A549 (cell line): ENCODE measurements at regions of chr15 and their contacts with region 1.

Region 1: GRCh38 chr15:75809986-75810750 is 33.1 kb upstream of the UBE2Q2 start:
- DNase-seq: peak; percentile 55 to 65
- ATAC-seq: peak; percentile 79 to 92
- H3K4me3 ChIP-seq: no peak overlapping the region
- H3K27ac ChIP-seq: no peak overlapping the region
- H3K4me1 ChIP-seq: no peaks in the 10 kb centered on the region
- CTCF ChIP-seq: peak; percentile 65
- EP300 ChIP-seq: no peak
- POLR2A ChIP-seq: no peak
- RAD21 ChIP-seq: peak; percentile 79 to 85

Region 2: DNA sequence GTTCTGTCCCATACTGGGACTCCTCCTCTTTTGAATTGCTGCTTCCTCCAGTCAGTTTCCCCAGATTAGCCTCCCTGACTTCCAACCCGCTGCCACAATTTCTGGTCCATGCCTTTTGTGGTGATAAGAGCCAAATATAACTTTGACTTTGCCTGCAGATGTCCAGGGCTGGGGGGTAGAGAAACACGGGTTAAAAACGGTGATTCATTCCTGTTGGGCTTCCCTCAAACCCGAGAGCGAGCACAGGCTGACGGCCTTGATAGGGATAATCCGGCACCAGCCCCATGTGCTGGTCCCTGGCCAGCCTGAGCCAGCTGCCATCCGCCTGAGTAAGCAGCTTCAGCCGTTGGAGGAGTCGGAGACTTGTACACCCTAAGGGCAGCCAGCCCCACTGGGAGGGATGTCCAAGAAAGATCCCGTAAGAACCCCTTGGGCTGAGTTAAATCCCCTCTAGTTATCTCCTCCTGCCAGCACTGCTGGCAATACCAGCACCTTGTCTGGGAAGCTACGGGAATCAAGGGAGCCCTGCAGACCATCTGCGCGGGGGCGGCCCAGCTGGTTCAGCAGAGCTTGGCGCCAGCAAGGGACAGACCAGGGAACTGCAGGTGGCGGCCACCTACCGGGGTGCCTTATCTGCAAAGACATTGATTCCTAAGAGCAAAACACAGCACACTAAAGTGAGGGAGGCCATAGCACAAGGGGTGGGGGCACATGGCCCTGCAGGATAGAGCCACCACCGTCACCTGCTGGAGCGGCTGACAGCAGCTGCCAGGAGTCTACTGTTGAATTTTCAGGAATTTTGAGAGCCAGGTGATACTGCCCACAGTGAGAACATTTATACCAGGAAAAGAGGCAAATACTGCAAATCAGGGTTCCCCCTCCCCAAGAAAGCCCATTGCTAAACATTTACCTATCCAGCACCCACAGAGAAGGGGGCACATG is 115.7 kb before region 1 on chr15:
- CTCF ChIA-PET with region 1: interaction called, 11 read pairs
- POLR2A ChIA-PET with region 1: no interaction called
- DNase-seq: peak; percentile 60 to 71
- ATAC-seq: peak; percentile 71 to 86
- H3K4me3 ChIP-seq: no peak overlapping the region
- H3K27ac ChIP-seq: peak overlapping the region; percentile 39 to 81; a peak in 4 of 6 replicates
- H3K4me1 ChIP-seq: peaks cover 19% of the 10 kb centered on the region
- CTCF ChIP-seq: 0 out of 3 replicates have a peak, but pooled peaks have one; percentile 20
- EP300 ChIP-seq: no peak
- POLR2A ChIP-seq: no peak
- RAD21 ChIP-seq: peak in 1 of 2 experiments; percentile 26; a peak in 1 of 5 replicates

Region 3: DNA sequence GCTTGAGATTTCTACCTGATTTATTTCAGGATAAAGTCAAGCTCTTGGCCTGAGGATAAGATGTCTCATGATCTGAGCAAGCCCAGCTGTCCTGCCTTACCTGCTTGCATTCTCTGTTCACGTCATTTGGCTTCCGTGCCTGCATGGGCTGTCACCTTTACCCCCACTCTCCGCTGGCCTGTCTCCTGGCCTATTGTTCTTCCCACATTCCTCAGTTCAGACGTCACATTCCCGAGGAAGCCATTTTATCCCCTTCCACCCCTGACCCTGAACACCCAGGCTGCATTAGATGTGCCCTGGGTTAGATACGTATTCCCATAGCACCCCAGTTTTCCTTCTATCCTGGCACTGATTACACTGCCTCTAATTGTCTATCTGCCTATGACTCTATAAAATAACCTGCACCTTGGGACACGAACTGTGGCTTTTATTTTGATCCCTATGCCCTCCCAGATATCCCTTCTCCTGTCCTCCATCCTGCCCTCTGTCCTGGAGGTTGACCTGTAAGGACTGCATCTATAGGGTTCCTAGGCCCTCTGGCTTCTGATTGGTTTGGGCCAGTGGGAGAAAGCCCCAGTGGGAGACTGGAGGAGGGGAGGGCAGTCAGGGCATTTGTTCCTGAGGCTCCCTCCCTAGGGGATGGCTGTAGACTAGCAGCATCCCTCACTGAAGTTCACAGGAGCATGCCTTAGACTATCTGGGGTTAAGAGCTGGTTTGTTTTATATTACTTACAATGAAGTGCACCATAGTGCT is 13.9 kb after region 1 on chr15:
- CTCF ChIA-PET with region 1: interaction called, 47 read pairs
- POLR2A ChIA-PET with region 1: no interaction called
- DNase-seq: peak in 1 of 2 experiments; percentile 25
- ATAC-seq: peak; percentile 22 to 69; a peak in 3 of 6 replicates
- H3K4me3 ChIP-seq: no peak overlapping the region
- H3K27ac ChIP-seq: no peak overlapping the region
- H3K4me1 ChIP-seq: no peaks in the 10 kb centered on the region
- CTCF ChIP-seq: no peak
- EP300 ChIP-seq: no peak
- POLR2A ChIP-seq: no peak
- RAD21 ChIP-seq: no peak

Region 4: GRCh38 chr15:75842722-75843551 is 32.8 kb after region 1 on chr15 and contains the start of gene UBE2Q2:
- CTCF ChIA-PET with region 1: interaction called, 17 read pairs
- POLR2A ChIA-PET with region 1: interaction called, 9 read pairs
- DNase-seq: peak; percentile 88 to 93
- ATAC-seq: peak; percentile 77 to 80
- H3K4me3 ChIP-seq: peak within 1 kb of the TSS; percentile 66
- H3K27ac ChIP-seq: peak within 1 kb of the TSS; percentile 88 to 92
- H3K4me1 ChIP-seq: peaks cover 21% of the 10 kb centered on the region
- CTCF ChIP-seq: no peak; the same call in 2 of the 3 replicates
- EP300 ChIP-seq: no peak
- POLR2A ChIP-seq: peak; percentile 78
- RAD21 ChIP-seq: no peak
- polyA plus RNA-seq, gene UBE2Q2: 41.2 and 50.6 TPM in 2 replicates

Region 5: DNA sequence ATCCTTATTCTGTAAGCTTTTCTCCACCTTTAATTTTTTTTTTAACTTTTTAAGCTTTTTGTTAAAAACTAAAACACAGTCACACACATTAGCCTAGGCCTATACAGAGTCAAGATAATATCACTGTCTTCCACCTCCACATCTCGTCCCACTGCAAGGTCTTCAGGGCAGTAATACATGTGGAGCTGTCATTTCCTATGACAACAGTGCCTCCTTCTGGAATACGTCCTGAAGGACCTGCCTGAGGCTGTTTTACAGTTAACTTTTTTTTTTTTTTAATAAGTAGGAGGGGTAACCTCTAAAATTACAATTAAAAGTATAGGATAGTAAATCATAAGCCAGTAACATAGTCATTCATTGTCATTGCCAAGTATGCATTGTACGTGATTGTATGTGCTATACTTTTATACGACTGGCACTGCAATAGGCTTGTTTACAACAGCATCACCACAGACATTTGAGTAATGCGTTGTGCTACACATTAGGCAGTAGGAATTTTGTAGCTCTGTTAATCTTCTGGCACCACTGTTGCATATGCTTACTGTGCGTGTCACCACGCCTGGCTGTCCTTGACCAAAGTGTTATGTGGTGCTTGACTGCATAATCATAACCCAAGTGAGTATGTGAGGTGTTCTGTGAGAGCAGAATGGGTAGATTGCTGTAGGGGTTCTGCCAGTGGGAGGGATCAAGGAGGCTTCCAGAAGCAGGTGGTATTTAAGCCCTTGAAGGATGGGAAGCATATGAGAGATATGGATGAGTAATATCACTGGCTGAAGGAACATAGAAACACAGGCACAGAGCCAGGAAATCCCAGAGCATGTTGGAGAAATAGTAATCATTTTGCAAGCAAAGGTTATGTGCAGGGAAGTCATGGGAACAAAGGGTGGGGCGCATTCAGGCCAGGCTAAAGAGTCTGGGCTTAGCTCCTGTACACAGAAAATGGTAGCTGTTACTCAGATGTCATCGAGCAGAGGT is 111.8 kb after region 1 on chr15:
- CTCF ChIA-PET with region 1: interaction called, 24 read pairs
- POLR2A ChIA-PET with region 1: no interaction called
- DNase-seq: peak in 1 of 2 experiments; percentile 71
- ATAC-seq: peak; percentile 70 to 85
- H3K4me3 ChIP-seq: no peak overlapping the region
- H3K27ac ChIP-seq: no peak overlapping the region
- H3K4me1 ChIP-seq: peaks cover 20% of the 10 kb centered on the region; the same call in 2 of the 3 replicates
- CTCF ChIP-seq: peak; percentile 59
- EP300 ChIP-seq: no peak
- POLR2A ChIP-seq: no peak
- RAD21 ChIP-seq: peak; percentile 54 to 66; a peak in 4 of 5 replicates

Region 6: GRCh38 chr15:75928680-75929608 is 118.8 kb after region 1 on chr15:
- CTCF ChIA-PET with region 1: interaction called, 24 read pairs
- POLR2A ChIA-PET with region 1: no interaction called
- DNase-seq: peak; percentile 38 to 75
- ATAC-seq: peak; percentile 91 to 94
- H3K4me3 ChIP-seq: no peak overlapping the region
- H3K27ac ChIP-seq: no peak overlapping the region
- H3K4me1 ChIP-seq: peaks cover 9% of the 10 kb centered on the region; the same call in 2 of the 3 replicates
- CTCF ChIP-seq: peak; percentile 64
- EP300 ChIP-seq: no peak
- POLR2A ChIP-seq: no peak
- RAD21 ChIP-seq: peak; percentile 66 to 70